Naive thymus-derived CD4-positive, alpha-beta T cell (primary cell): ENCODE measurements at regions of chr10 and their contacts with region 1.

Region 1: GRCh38 chr10:45454859-45455258 is 80.8 kb downstream of the ALOX5 start:
- DNase-seq: no peak
- ATAC-seq: no peak
- H3K4me3 ChIP-seq: no peak overlapping the region
- H3K4me3 Mint-ChIP-seq: peak overlapping the region in 1 of 10 donors; percentile 72
- H3K27ac ChIP-seq: no peak overlapping the region
- H3K27ac Mint-ChIP-seq: peak overlapping the region in 7 of 9 donors; percentile 12 to 90 (median 65)
- H3K4me1 ChIP-seq: no peaks in the 10 kb centered on the region
- H3K4me1 Mint-ChIP-seq: peaks cover 0 to 48% (median 8%) of the 10 kb centered on the region in 7 donors
- H3K27me3 ChIP-seq: no peaks in the 10 kb centered on the region
- H3K27me3 Mint-ChIP-seq: no peaks in the 10 kb centered on the region

Region 2: DNA sequence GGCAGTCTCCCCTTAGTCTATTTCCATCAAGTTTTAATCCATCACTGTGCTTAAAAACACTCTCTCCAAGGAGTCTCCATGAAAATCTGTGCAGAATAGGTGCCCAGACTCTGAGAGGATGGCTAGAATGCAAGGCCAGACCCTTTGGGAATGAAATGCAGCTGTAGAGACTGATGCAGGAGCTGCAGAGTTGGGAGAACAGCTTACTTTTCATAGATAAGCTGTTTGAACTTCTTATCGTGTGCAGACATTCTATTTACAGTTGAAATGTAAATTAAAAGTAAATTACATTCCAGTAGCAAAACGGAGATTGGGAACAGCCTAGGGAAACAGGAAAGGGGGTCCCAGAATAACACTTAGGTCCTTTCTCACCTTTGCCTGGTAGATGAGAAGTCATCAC is 439.3 kb before region 1 on chr10:
- CTCF ChIA-PET with region 1: no interaction called
- POLR2A ChIA-PET with region 1: no interaction called
- intact Hi-C with region 1: no loop called
- DNase-seq: no peak
- ATAC-seq: no peak
- H3K4me3 ChIP-seq: no peak overlapping the region
- H3K4me3 Mint-ChIP-seq: no peak overlapping the region
- H3K27ac ChIP-seq: no peak overlapping the region
- H3K27ac Mint-ChIP-seq: no peak overlapping the region
- H3K4me1 ChIP-seq: no peaks in the 10 kb centered on the region
- H3K4me1 Mint-ChIP-seq: no peaks in the 10 kb centered on the region
- H3K27me3 ChIP-seq: no peaks in the 10 kb centered on the region
- H3K27me3 Mint-ChIP-seq: peaks cover 0 to 24% (median 0%) of the 10 kb centered on the region in 5 donors

Region 3: DNA sequence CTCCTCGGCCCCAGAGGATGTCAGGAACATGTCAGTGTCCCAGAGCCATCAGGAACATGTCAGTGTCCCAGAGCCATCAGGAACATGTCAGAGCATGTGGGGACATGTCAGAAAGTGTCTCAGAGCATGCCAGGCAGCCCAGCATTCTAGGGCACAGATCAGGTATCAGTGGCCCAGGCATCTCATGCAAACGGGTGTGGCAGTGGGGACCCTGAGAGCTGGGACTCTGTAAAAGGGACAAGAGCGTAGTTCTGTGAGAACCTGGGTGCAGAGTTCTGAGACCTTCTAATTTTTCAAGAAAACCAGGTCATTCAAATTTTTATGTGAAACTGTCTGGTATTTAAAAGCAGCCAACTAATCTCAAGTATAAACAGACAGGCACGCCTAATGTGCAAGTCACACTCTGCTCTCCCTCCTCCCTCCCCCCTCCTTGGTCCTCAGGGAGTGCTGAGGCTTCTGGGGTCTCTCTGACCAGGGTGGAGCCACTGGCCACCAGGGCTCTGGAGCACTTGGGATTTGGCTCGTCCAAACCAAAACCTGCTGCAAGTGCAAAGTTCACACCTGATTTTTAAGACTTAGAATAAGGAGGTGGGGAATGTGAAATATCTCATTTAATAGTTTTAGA is 16.3 kb before region 1 on chr10:
- CTCF ChIA-PET with region 1: no interaction called
- POLR2A ChIA-PET with region 1: no interaction called
- intact Hi-C with region 1: loop called in 1 of 2 experiments (anchors 1 kb)
- DNase-seq: peak in 1 of 9 donors; percentile 9
- ATAC-seq: no peak
- H3K4me3 ChIP-seq: no peak overlapping the region
- H3K4me3 Mint-ChIP-seq: no peak overlapping the region
- H3K27ac ChIP-seq: no peak overlapping the region
- H3K27ac Mint-ChIP-seq: peak overlapping the region in 1 of 9 donors; percentile 27
- H3K4me1 ChIP-seq: peaks cover 0 to 5% of the 10 kb centered on the region in 2 donors
- H3K4me1 Mint-ChIP-seq: peaks cover under 1 to 20% (median 9%) of the 10 kb centered on the region in 7 donors
- H3K27me3 ChIP-seq: no peaks in the 10 kb centered on the region
- H3K27me3 Mint-ChIP-seq: peaks cover 0 to 7% (median 3%) of the 10 kb centered on the region in 5 donors

Region 4: DNA sequence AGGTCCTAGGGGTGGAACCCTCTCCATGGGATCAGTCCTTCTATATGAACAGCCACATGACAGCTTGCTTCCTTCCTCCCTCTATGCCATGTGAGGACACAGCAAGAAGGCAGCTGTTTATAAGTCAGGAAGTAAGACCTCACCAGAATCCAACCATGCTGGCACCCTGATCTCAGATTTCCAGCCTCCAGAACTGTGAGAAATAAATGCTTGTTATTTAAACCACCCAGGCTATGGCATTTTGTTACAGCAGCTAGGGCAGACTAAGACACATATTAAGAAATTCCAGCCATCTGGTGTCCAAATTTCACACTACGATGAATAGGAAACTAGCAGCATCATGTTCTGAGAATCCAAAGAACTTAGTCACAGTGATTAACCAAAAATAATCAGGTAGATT is 77.6 kb after region 1 on chr10:
- CTCF ChIA-PET with region 1: no interaction called
- POLR2A ChIA-PET with region 1: no interaction called
- intact Hi-C with region 1: no loop called
- DNase-seq: no peak
- ATAC-seq: no peak
- H3K4me3 ChIP-seq: no peak overlapping the region
- H3K4me3 Mint-ChIP-seq: no peak overlapping the region
- H3K27ac ChIP-seq: no peak overlapping the region
- H3K27ac Mint-ChIP-seq: peak overlapping the region in 2 of 9 donors; percentile 8 to 32
- H3K4me1 ChIP-seq: no peaks in the 10 kb centered on the region
- H3K4me1 Mint-ChIP-seq: peaks cover 0 to 43% (median 38%) of the 10 kb centered on the region in 7 donors
- H3K27me3 ChIP-seq: no peaks in the 10 kb centered on the region
- H3K27me3 Mint-ChIP-seq: peaks cover 0 to 3% (median 0%) of the 10 kb centered on the region in 5 donors